PC-9 (cell line): ENCODE measurements at regions of chr10 and their contacts with region 1.

Region 1: GRCh38 chr10:29757551-29758297 is 123.0 kb upstream of the SVIL start:
- DNase-seq: peak; percentile 75 to 90
- H3K4me3 ChIP-seq: no peak overlapping the region; the same call in 1 of the 2 replicates
- H3K27ac ChIP-seq: peak overlapping the region; percentile 86
- H3K4me1 ChIP-seq: peaks cover 24% of the 10 kb centered on the region
- H3K27me3 ChIP-seq: no peaks in the 10 kb centered on the region
- CTCF ChIP-seq: no peak

Region 2: GRCh38 chr10:28479425-28479865 is 1278.3 kb before region 1 on chr10:
- CTCF ChIA-PET with region 1: no interaction called
- POLR2A ChIA-PET with region 1: no interaction called
- intact Hi-C with region 1: no loop called
- DNase-seq: no peak
- H3K4me3 ChIP-seq: no peak overlapping the region
- H3K27ac ChIP-seq: no peak overlapping the region
- H3K4me1 ChIP-seq: no peaks in the 10 kb centered on the region
- H3K27me3 ChIP-seq: no peaks in the 10 kb centered on the region
- CTCF ChIP-seq: no peak

Region 3: GRCh38 chr10:29957907-29958356 is 200.2 kb after region 1 on chr10:
- CTCF ChIA-PET with region 1: no interaction called
- POLR2A ChIA-PET with region 1: no interaction called
- intact Hi-C with region 1: loop called (anchors 5 kb)
- DNase-seq: peak; percentile 94 to 97
- H3K4me3 ChIP-seq: no peak overlapping the region
- H3K27ac ChIP-seq: peak overlapping the region; percentile 88
- H3K4me1 ChIP-seq: peaks cover 44% of the 10 kb centered on the region
- H3K27me3 ChIP-seq: no peaks in the 10 kb centered on the region
- CTCF ChIP-seq: no peak